Dorsolateral prefrontal cortex (tissue), 120 donors: ENCODE measurements at regions of chr3 and their contacts with region 1.

Region 1: DNA sequence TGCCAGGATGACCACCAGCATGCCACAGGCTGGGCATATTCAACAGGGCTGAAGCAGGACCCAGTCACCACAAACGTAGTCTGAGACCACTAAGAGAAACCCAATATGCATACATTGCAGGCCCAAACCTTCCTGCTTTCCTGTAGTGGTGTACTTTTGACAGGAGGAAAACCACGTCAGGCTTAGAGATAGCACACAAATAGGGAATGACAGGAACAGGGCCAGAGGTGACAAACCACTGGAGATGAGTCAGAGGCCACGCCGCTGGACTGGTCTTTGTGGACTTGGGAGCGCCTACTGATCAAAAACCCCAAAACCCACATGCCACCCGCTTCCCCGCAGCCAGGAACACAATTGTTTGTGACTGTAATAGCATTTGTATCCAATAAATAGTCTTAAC is 3.6 kb upstream of the EFCAB12 start:
- DNase-seq: no peak
- H3K4me3 ChIP-seq: no peak overlapping the region
- H3K27ac ChIP-seq: no peak overlapping the region
- H3K27me3 ChIP-seq: no peaks in the 10 kb centered on the region
- CTCF ChIP-seq: no peak

Region 2: GRCh38 chr3:129399145-129399894 is 32.7 kb before region 1 on chr3:
- intact Hi-C with region 1: loop called in 1 of 2 experiments (anchors 5 kb)
- DNase-seq: peak; percentile 59 to 90 (median 77)
- H3K4me3 ChIP-seq: peak overlapping the region; percentile 67 to 99 (median 92)
- H3K27ac ChIP-seq: peak overlapping the region; percentile 83 to 99 (median 95)
- H3K27me3 ChIP-seq: no peaks in the 10 kb centered on the region
- CTCF ChIP-seq: peak; percentile 62 to 98 (median 88)